HEK293 (cell line): ENCODE measurements at regions of chr1 and their contacts with region 1.

Region 1: DNA sequence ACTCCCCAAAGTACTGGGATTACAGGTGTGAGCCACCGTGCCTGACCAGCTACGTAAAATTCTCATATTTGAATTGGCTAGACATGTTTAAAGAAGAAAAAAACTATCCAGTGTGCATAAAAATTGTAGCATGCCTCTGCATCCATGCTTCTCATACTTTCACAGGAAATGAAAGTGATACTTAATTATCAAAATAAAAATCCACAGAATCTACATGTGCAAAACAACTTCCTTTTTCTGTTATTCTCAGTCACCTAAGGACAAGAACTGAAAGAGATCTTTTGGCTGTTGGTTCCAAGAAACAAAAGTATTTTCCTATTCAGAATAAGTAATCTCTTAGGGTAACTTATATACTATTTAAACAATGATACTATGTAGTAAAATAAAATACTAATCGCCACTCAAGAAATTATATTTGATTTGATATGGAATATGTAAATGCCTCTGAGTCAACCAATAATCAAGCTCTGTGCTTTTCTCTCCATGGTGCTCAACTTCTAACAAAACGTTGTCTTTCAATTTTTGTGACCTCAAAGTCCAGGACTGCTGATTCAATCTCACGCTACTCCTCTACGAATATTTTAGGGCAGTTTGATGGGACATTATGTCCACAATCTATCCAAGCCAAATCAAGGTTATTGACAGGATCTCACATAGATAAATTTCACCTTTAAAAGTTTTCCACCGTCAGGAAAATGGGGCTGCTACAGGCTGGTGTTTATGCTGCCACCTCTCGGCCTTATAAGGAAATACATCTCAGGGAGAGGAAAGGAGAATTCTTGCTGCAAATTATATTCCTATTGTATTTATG is 102.7 kb downstream of the ZNF281 start:
- H3K4me3 ChIP-seq: no peak overlapping the region
- H3K27ac ChIP-seq: no peak overlapping the region
- H3K4me1 ChIP-seq: no peaks in the 10 kb centered on the region
- CTCF ChIP-seq: no peak

Region 2: GRCh38 chr1:200034761-200035396 is 272.3 kb before region 1 on chr1:
- CTCF ChIA-PET with region 1: no interaction called
- POLR2A ChIA-PET with region 1: no interaction called
- H3K4me3 ChIP-seq: no peak overlapping the region
- H3K27ac ChIP-seq: no peak overlapping the region
- H3K4me1 ChIP-seq: peaks cover under 1% of the 10 kb centered on the region; the same call in 1 of the 2 replicates
- CTCF ChIP-seq: no peak

Region 3: DNA sequence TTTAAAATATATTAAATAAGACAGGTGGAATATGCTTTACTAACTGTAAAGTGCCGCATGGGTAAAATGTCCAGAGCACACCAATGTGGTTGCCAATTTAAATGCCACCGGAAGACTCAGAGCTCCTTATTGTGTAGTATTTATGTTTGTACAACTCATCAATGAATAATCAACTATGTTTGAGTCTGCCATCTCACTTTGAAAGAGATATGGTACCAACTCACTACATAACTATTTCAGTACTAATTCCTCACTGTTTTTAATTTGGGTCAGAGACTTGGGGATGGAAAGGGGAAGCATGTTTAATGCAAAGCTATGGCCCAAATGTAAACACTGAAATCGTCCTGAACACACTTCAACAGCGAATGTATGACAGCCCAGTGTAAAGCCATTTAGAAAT is 134.8 kb before region 1 on chr1:
- CTCF ChIA-PET with region 1: no interaction called
- POLR2A ChIA-PET with region 1: no interaction called
- H3K4me3 ChIP-seq: no peak overlapping the region
- H3K27ac ChIP-seq: no peak overlapping the region
- H3K4me1 ChIP-seq: peaks cover 3% of the 10 kb centered on the region
- CTCF ChIP-seq: no peak

Region 4: GRCh38 chr1:200334661-200335256 is 27.6 kb after region 1 on chr1:
- CTCF ChIA-PET with region 1: interaction called, 11 read pairs
- POLR2A ChIA-PET with region 1: no interaction called
- H3K4me3 ChIP-seq: no peak overlapping the region
- H3K27ac ChIP-seq: no peak overlapping the region
- H3K4me1 ChIP-seq: no peaks in the 10 kb centered on the region
- CTCF ChIP-seq: no peak

Region 5: GRCh38 chr1:200384818-200385390 is 77.8 kb after region 1 on chr1:
- CTCF ChIA-PET with region 1: no interaction called
- POLR2A ChIA-PET with region 1: no interaction called
- H3K4me3 ChIP-seq: no peak overlapping the region
- H3K27ac ChIP-seq: no peak overlapping the region
- H3K4me1 ChIP-seq: no peaks in the 10 kb centered on the region
- CTCF ChIP-seq: no peak

Region 6: GRCh38 chr1:200473698-200474371 is 166.7 kb after region 1 on chr1:
- CTCF ChIA-PET with region 1: no interaction called
- POLR2A ChIA-PET with region 1: no interaction called
- H3K4me3 ChIP-seq: no peak overlapping the region
- H3K27ac ChIP-seq: no peak overlapping the region
- H3K4me1 ChIP-seq: 0 out of 2 replicates have a peak, but pooled peaks cover 2% of the 10 kb centered on the region
- CTCF ChIP-seq: no peak